ENCODE measurements at regions of chr7 and their contacts with region 1.

Region 1: GRCh38 chr7:87231256-87231655 is 11.7 kb upstream of the TMEM243 start:
- H3K4me3 ChIP-seq: no peak overlapping the region
- H3K27ac ChIP-seq: no peak overlapping the region
- H3K4me1 ChIP-seq: no peaks in the 10 kb centered on the region
- CTCF ChIP-seq: no peak

Region 2: DNA sequence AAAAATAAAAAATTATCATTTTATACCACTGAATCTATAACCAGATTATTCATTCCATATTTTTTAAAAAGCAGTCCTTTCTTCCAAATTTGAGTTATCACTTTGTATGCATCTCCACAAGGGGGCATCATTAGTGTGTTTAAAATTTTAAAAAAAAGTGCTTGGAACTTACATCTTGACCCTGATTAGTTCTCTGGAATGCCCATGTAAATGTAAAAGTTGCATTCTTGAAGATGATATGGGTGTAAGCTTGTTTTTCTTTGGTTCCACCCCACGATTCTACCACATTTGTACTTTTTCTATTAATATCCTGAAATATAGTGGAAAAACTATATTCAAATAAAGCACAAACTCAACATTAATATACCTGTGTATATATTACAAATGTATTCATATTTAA is 316.7 kb before region 1 on chr7:
- CTCF ChIA-PET with region 1: interaction called, 10 read pairs
- POLR2A ChIA-PET with region 1: no interaction called
- H3K4me3 ChIP-seq: no peak overlapping the region
- H3K27ac ChIP-seq: no peak overlapping the region
- H3K4me1 ChIP-seq: no peaks in the 10 kb centered on the region; the same call in 1 of the 2 replicates
- CTCF ChIP-seq: no peak

Region 3: DNA sequence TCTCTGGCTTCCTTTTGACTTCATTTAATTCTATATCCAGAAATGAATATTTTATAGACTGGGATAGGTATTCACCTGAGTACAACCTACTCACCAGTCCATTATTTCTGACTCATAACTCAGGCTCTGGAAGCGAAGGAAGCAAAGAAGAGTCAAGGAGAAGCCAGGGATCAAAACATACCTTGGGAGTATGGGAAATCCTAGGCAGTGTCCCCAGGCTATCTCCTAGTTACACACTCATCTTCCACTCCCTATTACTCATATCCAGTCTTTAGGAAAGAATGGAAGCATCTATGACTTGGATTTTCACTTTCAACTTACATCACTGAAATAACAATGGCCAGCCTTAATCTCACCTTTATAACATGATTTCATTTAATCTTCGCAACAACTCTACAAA is 130.9 kb before region 1 on chr7:
- CTCF ChIA-PET with region 1: no interaction called
- POLR2A ChIA-PET with region 1: no interaction called
- H3K4me3 ChIP-seq: no peak overlapping the region
- H3K27ac ChIP-seq: no peak overlapping the region
- H3K4me1 ChIP-seq: no peaks in the 10 kb centered on the region
- CTCF ChIP-seq: no peak